Endothelial cell of umbilical vein (primary cell): ENCODE measurements at regions of chrX and their contacts with region 1.

Region 1: GRCh38 chrX:130060122-130061069 is 49.9 kb downstream of the ELF4 start:
- DNase-seq: peak; percentile 59
- H3K4me3 ChIP-seq: peak overlapping the region; percentile 28 to 51 (median 31)
- H3K27ac ChIP-seq: peak overlapping the region; percentile 48
- H3K4me1 ChIP-seq: peaks cover 7% of the 10 kb centered on the region
- H3K27me3 ChIP-seq: no peaks in the 10 kb centered on the region
- CTCF ChIP-seq: peak; percentile 62 to 69
- POLR2A ChIP-seq: no peak

Region 2: GRCh38 chrX:129600981-129601424 is 459.4 kb before region 1 on chrX:
- CTCF ChIA-PET with region 1: interaction called, 36 read pairs
- POLR2A ChIA-PET with region 1: no interaction called
- dilution Hi-C with region 1: no loop called
- intact Hi-C with region 1: loop called (anchors 1 kb)
- DNase-seq: peak; percentile 21
- H3K4me3 ChIP-seq: no peak overlapping the region
- H3K27ac ChIP-seq: no peak overlapping the region
- H3K4me1 ChIP-seq: peaks cover 7% of the 10 kb centered on the region
- H3K27me3 ChIP-seq: no peaks in the 10 kb centered on the region
- CTCF ChIP-seq: peak; percentile 44 to 51
- POLR2A ChIP-seq: no peak

Region 3: GRCh38 chrX:129925305-129926092 is 134.9 kb before region 1 on chrX:
- CTCF ChIA-PET with region 1: interaction called, 57 read pairs
- POLR2A ChIA-PET with region 1: no interaction called
- dilution Hi-C with region 1: no loop called
- intact Hi-C with region 1: loop called (anchors 1 kb)
- DNase-seq: peak; percentile 66
- H3K4me3 ChIP-seq: no peak overlapping the region
- H3K27ac ChIP-seq: no peak overlapping the region
- H3K4me1 ChIP-seq: no peaks in the 10 kb centered on the region
- H3K27me3 ChIP-seq: no peaks in the 10 kb centered on the region
- CTCF ChIP-seq: peak; percentile 47 to 63
- POLR2A ChIP-seq: no peak

Region 4: GRCh38 chrX:129931411-129932015 is 128.9 kb before region 1 on chrX:
- CTCF ChIA-PET with region 1: interaction called, 57 read pairs
- POLR2A ChIA-PET with region 1: no interaction called
- dilution Hi-C with region 1: no loop called
- intact Hi-C with region 1: loop called (anchors 1 kb)
- DNase-seq: peak; percentile 78
- H3K4me3 ChIP-seq: peak overlapping the region; percentile 69 to 74 (median 71)
- H3K27ac ChIP-seq: peak overlapping the region; percentile 68
- H3K4me1 ChIP-seq: peaks cover 6% of the 10 kb centered on the region
- H3K27me3 ChIP-seq: peaks cover 4 to 8% of the 10 kb centered on the region in 2 experiments
- CTCF ChIP-seq: no peak
- POLR2A ChIP-seq: peak; percentile 11

Region 5: DNA sequence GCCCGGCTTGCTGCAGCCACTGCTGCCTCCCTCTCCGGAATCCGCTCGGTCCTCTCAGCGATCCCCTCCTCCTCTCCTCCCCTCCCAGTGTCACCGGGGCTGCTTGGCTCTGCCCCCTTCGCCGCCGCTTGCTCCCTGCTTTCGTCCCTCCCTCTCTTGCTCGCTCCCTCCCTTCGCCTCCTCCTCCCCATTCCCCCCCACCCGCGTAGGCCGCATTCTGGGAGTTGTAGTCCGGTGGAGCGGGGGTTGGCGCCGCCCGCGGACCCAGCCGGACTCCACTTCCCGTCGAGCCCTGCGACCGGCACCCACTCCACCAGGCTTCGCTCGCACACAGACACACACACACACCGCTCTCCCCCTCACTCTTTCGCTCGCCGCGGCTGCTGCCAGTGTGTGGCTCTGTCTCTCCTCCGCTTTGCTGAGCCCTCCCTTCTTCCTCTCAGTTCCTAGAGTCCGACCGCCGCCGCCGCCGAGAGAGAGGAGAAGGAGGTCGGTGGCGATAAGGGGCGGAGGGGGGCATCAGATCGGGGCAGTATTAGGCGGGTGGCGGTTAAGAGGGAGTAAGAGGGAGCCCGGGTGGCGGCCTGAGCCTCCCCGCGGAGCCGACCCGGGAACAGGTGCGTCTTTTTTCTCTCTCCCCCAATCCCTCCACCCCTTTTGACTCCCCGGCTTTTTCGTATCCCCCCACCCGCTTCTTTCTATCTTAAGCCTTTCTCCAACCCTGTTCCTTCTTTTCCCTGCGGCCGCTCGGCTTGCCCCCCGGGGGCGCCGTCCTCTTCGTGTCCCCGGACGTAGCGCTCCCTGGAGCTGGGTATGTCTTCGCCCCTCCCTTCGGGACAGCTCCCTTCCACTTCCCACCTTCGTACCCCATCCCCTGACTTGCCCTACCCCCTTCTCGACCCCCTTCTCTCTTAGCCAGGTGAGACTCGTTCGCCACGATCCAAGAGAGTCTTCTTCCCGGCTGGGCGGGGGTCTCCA is 77.8 kb before region 1 on chrX and contains the start of gene BCORL1:
- CTCF ChIA-PET with region 1: interaction called, 4 read pairs
- POLR2A ChIA-PET with region 1: no interaction called
- dilution Hi-C with region 1: no loop called
- intact Hi-C with region 1: loop called (anchors 5 kb)
- DNase-seq: peak; percentile 92
- H3K4me3 ChIP-seq: peak within 1 kb of the TSS; percentile 44 to 51 (median 50)
- H3K27ac ChIP-seq: no peak within 1 kb of the TSS
- H3K4me1 ChIP-seq: peaks cover 11% of the 10 kb centered on the region
- H3K27me3 ChIP-seq: no peaks in the 10 kb centered on the region
- CTCF ChIP-seq: no peak
- POLR2A ChIP-seq: peak; percentile 62
- total RNA-seq, gene BCORL1: 13.1 and 16.7 TPM in 2 replicates

Region 6: DNA sequence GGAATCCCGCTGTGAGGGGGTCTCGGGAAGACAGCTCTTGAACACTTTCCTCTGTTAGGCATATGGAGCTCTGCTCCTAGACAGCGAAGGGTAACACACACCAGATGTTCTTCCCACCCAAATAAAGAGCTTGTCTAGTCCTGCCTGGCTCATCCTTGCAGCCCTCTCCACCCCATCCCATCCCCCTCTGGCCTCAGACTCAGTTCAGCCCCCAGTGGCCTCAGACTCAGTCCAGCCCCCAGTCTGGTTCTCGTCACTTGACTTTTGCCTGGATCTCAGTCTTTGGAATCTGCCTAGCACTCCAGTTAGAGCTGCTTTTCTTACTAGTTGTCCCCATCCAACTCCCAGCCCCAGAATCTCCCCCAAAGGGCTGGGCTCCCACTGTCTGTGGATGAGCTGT is 126.3 kb after region 1 on chrX:
- CTCF ChIA-PET with region 1: interaction called, 6 read pairs
- POLR2A ChIA-PET with region 1: no interaction called
- dilution Hi-C with region 1: no loop called
- intact Hi-C with region 1: loop called (anchors 5 kb)
- DNase-seq: no peak
- H3K4me3 ChIP-seq: no peak overlapping the region
- H3K27ac ChIP-seq: no peak overlapping the region
- H3K4me1 ChIP-seq: no peaks in the 10 kb centered on the region
- H3K27me3 ChIP-seq: no peaks in the 10 kb centered on the region
- CTCF ChIP-seq: no peak
- POLR2A ChIP-seq: no peak

Region 7: DNA sequence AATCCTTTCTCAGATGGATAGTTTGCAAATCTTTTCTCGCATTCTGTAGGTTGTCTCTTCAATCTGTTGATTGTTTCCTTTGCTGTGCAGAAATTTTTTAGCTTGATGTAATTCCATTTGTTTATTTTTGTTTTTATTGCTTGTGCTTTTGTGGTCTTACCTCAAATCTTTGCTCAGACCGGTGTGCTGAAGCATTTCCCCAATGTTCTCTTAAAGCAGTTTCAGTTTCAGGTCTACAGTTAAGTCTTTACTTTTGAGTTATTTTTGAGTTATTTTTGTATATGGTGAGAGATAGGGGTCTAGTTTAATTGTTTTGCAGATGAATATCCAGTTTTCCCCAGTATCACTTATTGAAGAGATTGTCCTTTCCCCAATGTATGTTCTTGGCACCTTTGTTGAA is 261.2 kb after region 1 on chrX:
- CTCF ChIA-PET with region 1: no interaction called
- POLR2A ChIA-PET with region 1: no interaction called
- dilution Hi-C with region 1: no loop called
- intact Hi-C with region 1: no loop called
- DNase-seq: no peak
- H3K4me3 ChIP-seq: no peak overlapping the region
- H3K27ac ChIP-seq: no peak overlapping the region
- H3K4me1 ChIP-seq: no peaks in the 10 kb centered on the region
- H3K27me3 ChIP-seq: no peaks in the 10 kb centered on the region
- CTCF ChIP-seq: no peak
- POLR2A ChIP-seq: no peak